ENCODE measurements at regions of chr1 and their contacts with region 1.

Region 1: GRCh38 chr1:35451125-35451528 is 106.1 kb downstream of the KIAA0319L start:
- DNase-seq: peak; percentile 92

Region 2: DNA sequence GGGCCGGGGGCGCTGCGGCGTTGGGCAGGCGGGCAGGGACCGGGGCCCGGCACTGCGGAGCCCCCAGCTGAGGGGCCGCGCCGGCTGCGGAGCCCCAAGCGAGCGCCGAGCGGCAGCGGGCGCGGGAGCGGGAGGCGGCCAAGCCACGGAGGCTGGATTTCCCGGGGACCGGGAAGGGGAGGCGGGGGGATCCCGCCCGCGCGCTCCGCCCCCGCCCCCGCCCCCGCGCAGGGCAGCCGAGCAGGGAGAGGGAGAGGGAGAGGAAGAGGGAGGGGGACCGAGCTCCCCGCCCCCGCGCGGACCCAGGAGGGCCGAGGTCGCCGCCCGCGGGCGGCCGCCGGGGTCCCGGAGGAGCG is 521.7 kb before region 1 on chr1 and contains the start of gene DLGAP3:
- intact Hi-C with region 1: no loop called
- DNase-seq: no peak
- total RNA-seq, gene DLGAP3: 0.11 TPM

Region 3: DNA sequence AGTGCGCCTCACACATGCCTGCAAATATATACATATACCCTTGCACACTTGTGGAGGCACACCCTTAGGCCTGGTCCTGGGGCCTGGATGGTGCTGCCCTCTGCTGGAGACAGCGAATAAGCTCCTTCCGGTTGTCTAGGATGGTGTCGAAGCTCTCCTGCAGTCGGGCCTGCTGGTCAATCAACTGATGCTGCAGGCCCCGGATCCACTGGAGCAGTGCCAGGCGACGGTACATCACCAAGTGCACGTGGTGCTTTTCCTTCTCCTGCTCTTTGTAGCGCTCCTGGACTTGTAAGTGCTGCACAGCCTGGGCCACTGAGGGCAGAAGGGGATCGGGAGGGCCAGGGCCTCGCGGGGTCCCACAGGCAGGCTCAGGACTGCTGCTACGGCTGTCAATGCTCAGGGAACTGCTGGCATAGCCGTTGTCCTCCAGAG is 264.5 kb after region 1 on chr1:
- intact Hi-C with region 1: no loop called
- DNase-seq: peak; percentile 82

Region 4: DNA sequence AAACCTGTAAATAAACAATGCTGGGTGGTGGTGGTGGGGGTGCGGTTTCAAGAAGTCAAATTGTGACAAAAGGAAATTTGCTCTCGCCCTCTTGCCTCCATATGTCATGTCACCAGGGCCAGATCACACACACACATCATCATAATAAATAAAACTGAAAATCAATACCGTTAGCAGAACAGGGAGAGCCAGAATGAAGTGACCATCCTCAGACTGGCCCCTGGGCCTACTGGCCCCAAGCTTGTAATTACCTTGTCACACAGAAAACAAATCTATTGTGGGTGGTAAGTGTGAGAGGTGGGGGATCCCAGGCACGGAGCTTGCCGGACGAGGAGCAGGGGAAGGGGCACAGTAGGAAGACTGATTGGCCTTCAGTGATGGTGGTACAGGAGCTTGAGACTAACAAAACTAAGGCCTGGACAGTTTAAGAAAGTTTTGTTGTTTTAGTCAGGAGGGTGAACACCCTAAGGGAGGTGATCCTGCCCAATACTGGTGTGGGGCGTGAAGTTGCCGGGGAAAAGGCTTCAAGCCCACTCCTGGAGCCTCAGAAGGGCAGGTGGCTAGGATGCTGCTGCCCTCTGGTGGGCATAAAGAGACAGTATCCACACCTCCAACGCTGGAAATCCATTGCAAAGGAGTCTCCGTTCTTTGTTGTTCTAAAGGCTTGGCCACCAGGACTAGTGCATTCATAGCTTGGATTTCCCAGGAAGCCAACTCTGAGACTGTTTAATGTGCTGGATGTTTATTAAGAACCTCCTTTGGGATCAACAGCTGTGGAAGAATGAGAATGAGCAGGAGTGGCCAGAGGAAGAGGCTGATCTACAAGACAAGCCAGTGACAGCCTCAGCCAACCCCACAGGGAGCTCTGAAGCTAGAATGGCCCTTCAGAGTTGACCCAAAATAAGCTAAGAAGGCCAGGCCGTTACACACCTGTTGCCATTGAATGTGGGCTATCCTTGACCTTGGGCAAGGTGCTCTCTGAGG is 275.6 kb after region 1 on chr1:
- intact Hi-C with region 1: loop called (anchors 5 kb)
- DNase-seq: no peak

Measured in cardiac septum (tissue), 1 donor.